PC-9 (cell line): ENCODE measurements at regions of chr5 and their contacts with region 1.

Region 1: GRCh38 chr5:11182441-11183268 is 421.6 kb upstream of the DAP start:
- DNase-seq: peak; percentile 19 to 34
- H3K4me3 ChIP-seq: no peak overlapping the region
- H3K27ac ChIP-seq: no peak overlapping the region
- H3K4me1 ChIP-seq: no peaks in the 10 kb centered on the region
- H3K27me3 ChIP-seq: peaks cover 33% of the 10 kb centered on the region
- CTCF ChIP-seq: peak; percentile 71

Region 2: GRCh38 chr5:10987930-10988504 is 194.6 kb before region 1 on chr5:
- CTCF ChIA-PET with region 1: no interaction called
- POLR2A ChIA-PET with region 1: no interaction called
- intact Hi-C with region 1: loop called (anchors 1 kb)
- DNase-seq: peak in 1 of 2 experiments; percentile 72
- H3K4me3 ChIP-seq: no peak overlapping the region
- H3K27ac ChIP-seq: no peak overlapping the region
- H3K4me1 ChIP-seq: no peaks in the 10 kb centered on the region
- H3K27me3 ChIP-seq: peaks cover 49% of the 10 kb centered on the region
- CTCF ChIP-seq: peak; percentile 70